IMR-90 (cell line): ENCODE measurements at regions of chr22 and their contacts with region 1.

Region 1: DNA sequence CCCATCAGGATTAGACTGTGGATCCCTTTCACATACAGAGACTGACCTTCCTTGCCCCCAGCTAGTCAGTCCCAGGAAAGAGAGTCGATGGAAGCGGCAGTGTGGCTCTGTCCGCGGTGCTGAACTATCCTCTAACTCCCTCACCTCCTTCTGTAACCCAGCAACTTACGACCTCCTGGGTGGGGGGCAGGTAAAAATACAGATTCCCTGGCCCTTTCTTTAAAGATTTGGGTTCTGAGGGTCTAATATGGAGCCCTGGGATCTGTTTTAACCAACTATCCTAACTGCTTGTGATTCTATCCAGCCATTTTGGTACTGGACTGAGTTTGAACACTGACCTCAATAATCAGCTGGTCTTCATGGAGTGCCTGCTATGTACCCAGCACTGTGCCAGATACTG is 23.2 kb downstream of the MFNG start:
- DNase-seq: peak; percentile 49
- ATAC-seq: peak; percentile 92
- H3K4me3 ChIP-seq: no peak overlapping the region
- H3K27ac ChIP-seq: no peak overlapping the region
- H3K4me1 ChIP-seq: no peaks in the 10 kb centered on the region
- H3K27me3 ChIP-seq: peaks cover 33% of the 10 kb centered on the region
- CTCF ChIP-seq: no peak
- POLR2A ChIP-seq: no peak
- RAD21 ChIP-seq: no peak

Region 2: DNA sequence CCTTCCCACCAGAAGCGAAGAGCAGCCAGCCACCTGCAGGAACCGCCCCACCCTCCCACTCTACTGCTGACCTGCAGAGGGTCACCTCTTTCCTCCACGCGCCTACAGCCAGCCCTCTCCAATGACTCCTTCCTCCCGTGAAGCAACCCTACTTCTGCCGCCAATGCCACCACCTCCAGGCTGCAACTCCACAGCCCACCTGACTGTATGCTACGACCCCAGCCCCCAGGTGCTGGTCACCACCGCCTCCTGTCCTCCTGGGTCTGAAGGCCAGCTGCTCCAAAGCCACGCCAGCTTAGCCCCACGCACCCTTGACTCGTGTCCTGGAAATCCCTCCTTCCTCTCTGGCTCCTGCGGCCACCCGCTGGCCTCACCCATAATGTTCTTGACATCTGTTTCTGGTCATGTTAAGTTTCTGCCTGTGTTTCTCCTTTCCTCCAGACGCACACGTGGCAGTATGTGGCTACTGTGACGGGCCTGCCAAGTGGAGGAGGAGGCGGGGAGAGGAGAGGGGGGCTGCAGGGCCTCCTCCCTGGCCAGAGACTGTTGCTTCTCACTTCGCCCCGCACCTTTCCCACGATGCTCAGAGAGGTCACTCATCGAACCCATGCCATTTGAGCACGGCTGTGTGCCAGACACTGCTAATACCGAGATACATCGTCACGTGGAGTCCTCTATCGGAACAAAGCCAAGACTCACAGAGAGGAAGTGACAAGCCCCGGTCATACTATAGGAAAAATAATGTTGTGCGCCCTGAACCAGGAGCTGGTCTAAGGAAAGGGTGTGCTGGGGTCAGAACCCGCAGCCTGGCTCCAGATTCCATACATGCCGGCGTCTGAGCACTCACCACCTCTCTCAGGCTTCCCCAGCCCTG is 286.5 kb before region 1 on chr22:
- CTCF ChIA-PET with region 1: no interaction called
- POLR2A ChIA-PET with region 1: no interaction called
- dilution Hi-C with region 1: no loop called
- in situ Hi-C with region 1: loop called (anchors 10 kb)
- intact Hi-C with region 1: no loop called
- DNase-seq: peak; percentile 78
- ATAC-seq: peak; percentile 76
- H3K4me3 ChIP-seq: no peak overlapping the region
- H3K27ac ChIP-seq: no peak overlapping the region
- H3K4me1 ChIP-seq: peaks cover 17% of the 10 kb centered on the region
- H3K27me3 ChIP-seq: peaks cover 21% of the 10 kb centered on the region
- CTCF ChIP-seq: no peak
- POLR2A ChIP-seq: no peak
- RAD21 ChIP-seq: no peak

Region 3: DNA sequence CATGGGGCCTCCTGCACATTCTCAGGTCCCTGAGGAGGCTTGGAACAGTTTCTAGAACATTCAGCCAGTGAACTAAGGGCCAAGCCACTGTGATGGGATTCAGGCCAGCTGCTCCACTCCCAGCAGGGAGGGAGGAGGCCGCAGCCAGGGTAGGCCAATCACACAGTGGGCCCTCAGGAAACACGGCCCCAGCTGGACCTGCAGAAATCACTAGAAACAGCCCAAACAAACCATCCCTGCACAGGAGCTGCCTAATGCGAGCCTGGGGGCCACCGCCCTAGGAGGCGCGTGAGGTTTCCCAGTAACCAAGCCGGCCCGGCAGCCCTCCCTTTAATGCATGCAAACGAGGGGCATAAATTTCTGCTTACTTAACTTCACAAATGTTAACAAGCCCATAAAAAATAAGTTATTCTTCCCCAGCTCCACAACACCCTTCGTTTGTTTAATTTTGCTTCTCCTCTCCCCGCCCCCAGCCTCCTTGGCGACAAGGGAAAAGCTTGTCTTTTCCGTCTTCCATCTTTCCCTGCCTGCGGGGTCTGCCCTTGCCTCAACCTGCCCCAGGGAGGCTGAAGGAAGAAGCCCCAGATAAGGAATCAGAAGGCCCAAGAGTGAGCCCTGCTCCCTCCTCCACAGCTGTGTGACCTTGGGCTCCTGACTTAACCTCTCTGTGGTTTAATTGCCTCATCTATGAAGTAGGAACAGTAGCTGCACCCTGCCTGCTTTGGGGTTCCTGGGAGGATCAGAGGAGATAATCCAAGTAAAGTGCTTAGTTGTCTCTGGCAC is 61.4 kb before region 1 on chr22:
- CTCF ChIA-PET with region 1: no interaction called
- POLR2A ChIA-PET with region 1: no interaction called
- dilution Hi-C with region 1: no loop called
- in situ Hi-C with region 1: no loop called
- intact Hi-C with region 1: no loop called
- DNase-seq: peak; percentile 23
- ATAC-seq: peak; percentile 55
- H3K4me3 ChIP-seq: no peak overlapping the region
- H3K27ac ChIP-seq: no peak overlapping the region
- H3K4me1 ChIP-seq: peaks cover 4% of the 10 kb centered on the region; the same call in 1 of the 2 replicates
- H3K27me3 ChIP-seq: no peaks in the 10 kb centered on the region; the same call in 1 of the 2 replicates
- CTCF ChIP-seq: no peak
- POLR2A ChIP-seq: no peak
- RAD21 ChIP-seq: no peak

Region 4: GRCh38 chr22:37544955-37545699 is 82.1 kb after region 1 on chr22:
- CTCF ChIA-PET with region 1: no interaction called
- POLR2A ChIA-PET with region 1: no interaction called
- dilution Hi-C with region 1: no loop called
- in situ Hi-C with region 1: no loop called
- intact Hi-C with region 1: no loop called
- DNase-seq: peak; percentile 58
- ATAC-seq: peak; percentile 40
- H3K4me3 ChIP-seq: no peak overlapping the region
- H3K27ac ChIP-seq: peak overlapping the region; percentile 89
- H3K4me1 ChIP-seq: peaks cover 30% of the 10 kb centered on the region
- H3K27me3 ChIP-seq: no peaks in the 10 kb centered on the region
- CTCF ChIP-seq: peak; percentile 88
- POLR2A ChIP-seq: no peak
- RAD21 ChIP-seq: peak; percentile 83

Region 5: GRCh38 chr22:37696657-37697537 is 233.9 kb after region 1 on chr22 and contains the start of gene TRIOBP:
- CTCF ChIA-PET with region 1: no interaction called
- POLR2A ChIA-PET with region 1: no interaction called
- dilution Hi-C with region 1: no loop called
- in situ Hi-C with region 1: no loop called
- intact Hi-C with region 1: no loop called
- DNase-seq: peak; percentile 91
- ATAC-seq: peak; percentile 100
- H3K4me3 ChIP-seq: peak within 1 kb of the TSS; percentile 22; the same call in 1 of the 2 replicates
- H3K27ac ChIP-seq: no peak within 1 kb of the TSS
- H3K4me1 ChIP-seq: peaks cover 8% of the 10 kb centered on the region
- H3K27me3 ChIP-seq: no peaks in the 10 kb centered on the region
- CTCF ChIP-seq: peak; percentile 53
- POLR2A ChIP-seq: no peak
- RAD21 ChIP-seq: peak; percentile 44
- total RNA-seq, gene TRIOBP: 46.4 and 47.5 TPM in 2 replicates